A673 (cell line): ENCODE measurements at regions of chr3 and their contacts with region 1.

Region 1: GRCh38 chr3:109023656-109024254 is 70.1 kb upstream of the GUCA1C start:
- DNase-seq: peak; percentile 59
- H3K4me3 ChIP-seq: no peak overlapping the region
- H3K27ac ChIP-seq: no peak overlapping the region
- H3K4me1 ChIP-seq: peaks cover 12% of the 10 kb centered on the region
- H3K27me3 ChIP-seq: no peaks in the 10 kb centered on the region
- CTCF ChIP-seq: peak; percentile 82

Region 2: DNA sequence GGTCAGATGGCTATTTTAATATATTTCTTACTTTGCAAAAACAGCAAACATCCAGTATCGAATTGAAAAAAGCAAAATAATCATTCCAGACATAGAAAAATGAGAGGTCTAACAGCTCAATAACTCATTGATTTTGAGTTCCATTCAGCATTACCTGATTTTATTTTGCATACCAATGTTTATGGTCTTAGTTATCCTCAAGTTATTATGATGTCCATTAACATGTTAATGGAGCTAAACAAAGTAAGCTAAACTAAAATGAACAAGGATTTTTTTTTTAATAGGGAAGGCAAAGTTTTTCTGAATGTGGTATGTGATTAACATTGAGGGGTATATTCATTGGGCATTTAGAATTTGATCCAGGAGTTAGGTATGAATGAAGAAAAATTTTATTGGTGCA is 526.5 kb before region 1 on chr3:
- CTCF ChIA-PET with region 1: no interaction called
- POLR2A ChIA-PET with region 1: interaction called, 11 read pairs
- intact Hi-C with region 1: no loop called
- DNase-seq: no peak
- H3K4me3 ChIP-seq: no peak overlapping the region
- H3K27ac ChIP-seq: no peak overlapping the region
- H3K4me1 ChIP-seq: peaks cover 19% of the 10 kb centered on the region
- H3K27me3 ChIP-seq: no peaks in the 10 kb centered on the region
- CTCF ChIP-seq: no peak

Region 3: GRCh38 chr3:109081746-109082510 is 58.2 kb after region 1 on chr3:
- CTCF ChIA-PET with region 1: interaction called, 3 read pairs
- POLR2A ChIA-PET with region 1: no interaction called
- intact Hi-C with region 1: loop called (anchors 1 kb)
- DNase-seq: peak; percentile 65
- H3K4me3 ChIP-seq: no peak overlapping the region
- H3K27ac ChIP-seq: no peak overlapping the region
- H3K4me1 ChIP-seq: no peaks in the 10 kb centered on the region
- H3K27me3 ChIP-seq: no peaks in the 10 kb centered on the region
- CTCF ChIP-seq: peak; percentile 87

Region 4: GRCh38 chr3:109396806-109397205 is 373.1 kb after region 1 on chr3:
- CTCF ChIA-PET with region 1: no interaction called
- POLR2A ChIA-PET with region 1: no interaction called
- intact Hi-C with region 1: loop called (anchors 10 kb)
- DNase-seq: no peak
- H3K4me3 ChIP-seq: no peak overlapping the region
- H3K27ac ChIP-seq: no peak overlapping the region
- H3K4me1 ChIP-seq: no peaks in the 10 kb centered on the region
- H3K27me3 ChIP-seq: no peaks in the 10 kb centered on the region
- CTCF ChIP-seq: no peak

Region 5: GRCh38 chr3:109784852-109785631 is 761.3 kb after region 1 on chr3:
- CTCF ChIA-PET with region 1: no interaction called
- POLR2A ChIA-PET with region 1: no interaction called
- intact Hi-C with region 1: no loop called
- DNase-seq: no peak
- H3K4me3 ChIP-seq: no peak overlapping the region
- H3K27ac ChIP-seq: no peak overlapping the region
- H3K4me1 ChIP-seq: peaks cover 19% of the 10 kb centered on the region
- H3K27me3 ChIP-seq: no peaks in the 10 kb centered on the region
- CTCF ChIP-seq: no peak